ENCODE measurements at regions of chr1 and their contacts with region 1.

Region 1: GRCh38 chr1:168089326-168089978 is 47.3 kb downstream of the GPR161 start:
- DNase-seq: no peak
- ATAC-seq: peak; percentile 46
- H3K4me3 ChIP-seq: no peak overlapping the region
- H3K27ac ChIP-seq: no peak overlapping the region
- H3K4me1 ChIP-seq: peaks cover 8% of the 10 kb centered on the region
- H3K27me3 ChIP-seq: no peaks in the 10 kb centered on the region
- CTCF ChIP-seq: no peak
- POLR2A ChIP-seq: no peak
- RAD21 ChIP-seq: no peak

Region 2: GRCh38 chr1:168100315-168101002 is 11.0 kb after region 1 on chr1:
- CTCF ChIA-PET with region 1: interaction called, 3 read pairs
- POLR2A ChIA-PET with region 1: no interaction called
- dilution Hi-C with region 1: no loop called
- in situ Hi-C with region 1: no loop called
- intact Hi-C with region 1: loop called (anchors 1 kb)
- DNase-seq: no peak
- ATAC-seq: no peak
- H3K4me3 ChIP-seq: no peak overlapping the region
- H3K27ac ChIP-seq: no peak overlapping the region
- H3K4me1 ChIP-seq: no peaks in the 10 kb centered on the region
- H3K27me3 ChIP-seq: no peaks in the 10 kb centered on the region
- CTCF ChIP-seq: no peak
- POLR2A ChIP-seq: no peak
- RAD21 ChIP-seq: no peak

Measured in IMR-90 (cell line).